Calu3 (cell line): ENCODE measurements at regions of chr2 and their contacts with region 1.

Region 1: GRCh38 chr2:15939854-15940660 is at the start of gene MYCN:
- DNase-seq: peak; percentile 81
- H3K4me3 Mint-ChIP-seq: peak within 1 kb of the TSS; percentile 99
- H3K27ac Mint-ChIP-seq: peak within 1 kb of the TSS; percentile 50
- H3K4me1 Mint-ChIP-seq: peaks cover 22% of the 10 kb centered on the region
- H3K27me3 Mint-ChIP-seq: no peaks in the 10 kb centered on the region
- CTCF ChIP-seq: peak; percentile 86
- total RNA-seq, gene MYCN: 5.5 and 8.7 TPM in 2 replicates

Region 2: GRCh38 chr2:15636972-15637785 is 302.9 kb before region 1 on chr2:
- CTCF ChIA-PET with region 1: no interaction called
- intact Hi-C with region 1: loop called (anchors 5 kb)
- DNase-seq: peak; percentile 61
- H3K4me3 Mint-ChIP-seq: no peak overlapping the region
- H3K27ac Mint-ChIP-seq: no peak overlapping the region
- H3K4me1 Mint-ChIP-seq: no peaks in the 10 kb centered on the region
- H3K27me3 Mint-ChIP-seq: no peaks in the 10 kb centered on the region
- CTCF ChIP-seq: peak; percentile 78

Region 3: GRCh38 chr2:15976354-15976753 is 36.3 kb after region 1 on chr2:
- CTCF ChIA-PET with region 1: interaction called, 4 read pairs
- intact Hi-C with region 1: loop called (anchors 1 kb)
- DNase-seq: peak; percentile 62
- H3K4me3 Mint-ChIP-seq: no peak overlapping the region
- H3K27ac Mint-ChIP-seq: peak overlapping the region; percentile 75
- H3K4me1 Mint-ChIP-seq: peaks cover 47% of the 10 kb centered on the region
- H3K27me3 Mint-ChIP-seq: no peaks in the 10 kb centered on the region
- CTCF ChIP-seq: no peak

Region 4: DNA sequence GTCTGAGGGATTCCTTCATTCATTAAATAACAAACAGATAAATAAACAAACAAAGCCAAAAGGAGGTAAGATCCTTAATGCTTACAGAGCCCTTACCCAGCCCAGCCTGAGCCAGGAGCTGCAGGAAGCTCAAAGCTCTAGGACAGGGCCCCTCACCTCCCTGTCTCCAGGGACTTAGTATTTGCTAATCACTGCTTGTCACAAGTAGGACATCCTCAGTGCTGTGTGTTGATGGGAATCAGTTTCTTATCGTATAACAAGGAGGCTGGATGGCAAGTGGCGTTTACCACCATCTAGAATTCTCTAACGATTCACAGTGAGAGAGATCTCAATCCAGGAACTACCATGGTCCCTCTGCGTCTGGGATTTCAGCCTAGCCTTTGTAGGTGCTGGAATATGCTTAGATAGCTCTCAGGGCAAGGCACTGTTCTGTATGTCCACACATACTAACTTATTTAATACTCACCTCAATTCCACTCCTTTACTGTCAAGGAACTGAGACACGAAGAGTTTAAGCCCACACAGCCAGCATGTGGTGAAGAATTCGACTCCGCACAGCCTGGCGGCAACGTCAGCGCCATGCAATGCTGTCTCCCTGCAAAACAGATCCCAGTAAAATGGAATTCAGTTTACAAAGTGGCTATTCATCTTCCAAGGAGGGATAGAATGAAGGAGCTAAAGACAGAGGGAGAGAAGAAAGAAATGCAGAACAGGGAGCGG is 165.1 kb after region 1 on chr2:
- CTCF ChIA-PET with region 1: interaction called, 3 read pairs
- intact Hi-C with region 1: loop called (anchors 5 kb)
- DNase-seq: no peak
- H3K4me3 Mint-ChIP-seq: no peak overlapping the region
- H3K27ac Mint-ChIP-seq: no peak overlapping the region
- H3K4me1 Mint-ChIP-seq: peaks cover 9% of the 10 kb centered on the region
- H3K27me3 Mint-ChIP-seq: no peaks in the 10 kb centered on the region
- CTCF ChIP-seq: no peak

Region 5: DNA sequence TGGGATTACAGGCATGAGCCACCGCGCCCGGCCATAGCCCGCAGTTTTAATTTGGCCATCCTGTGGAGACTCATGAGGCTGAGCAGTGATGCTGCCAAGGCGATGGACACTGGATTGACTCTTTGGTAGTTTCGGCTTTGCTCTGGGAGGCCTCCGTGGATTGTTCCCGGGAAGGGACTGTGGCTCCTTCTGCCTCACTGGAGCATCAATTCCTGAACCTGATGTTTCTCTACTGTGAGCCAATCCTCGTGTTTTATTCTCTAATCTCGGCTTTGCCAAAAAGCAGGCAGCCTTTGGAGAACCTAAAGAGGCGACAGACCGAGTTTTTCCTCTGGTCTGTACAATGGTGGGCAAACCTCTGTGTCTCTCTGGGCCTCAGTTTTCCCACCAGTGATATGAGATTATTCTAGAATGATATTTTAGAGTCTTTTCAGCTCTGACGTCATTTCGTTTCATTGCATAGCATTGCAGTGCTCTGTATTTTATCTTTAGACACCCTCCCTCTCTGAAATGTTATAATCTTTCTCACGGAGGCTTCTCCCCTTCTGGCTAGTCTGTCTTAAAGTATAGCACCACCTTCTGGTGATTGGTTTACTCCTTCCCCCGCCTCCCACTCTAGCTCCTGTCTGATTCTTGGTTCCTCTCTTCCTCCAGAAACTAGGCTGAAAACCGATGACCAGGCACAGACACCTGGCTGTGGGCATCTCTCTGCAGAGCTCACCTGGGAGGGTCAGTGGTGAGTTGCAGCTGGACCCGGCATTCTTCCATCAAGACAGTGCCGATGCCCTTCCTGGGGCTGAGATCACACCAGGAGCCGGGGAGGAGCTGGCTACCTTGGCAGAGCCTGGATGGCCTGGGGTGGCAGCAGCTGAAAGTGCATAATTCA is 341.6 kb after region 1 on chr2:
- CTCF ChIA-PET with region 1: interaction called, 47 read pairs
- intact Hi-C with region 1: loop called (anchors 1 kb)
- DNase-seq: peak; percentile 57
- H3K4me3 Mint-ChIP-seq: no peak overlapping the region
- H3K27ac Mint-ChIP-seq: no peak overlapping the region
- H3K4me1 Mint-ChIP-seq: no peaks in the 10 kb centered on the region
- H3K27me3 Mint-ChIP-seq: peaks cover 24% of the 10 kb centered on the region
- CTCF ChIP-seq: peak; percentile 51

Region 6: GRCh38 chr2:16608661-16609643 is 668.9 kb after region 1 on chr2:
- CTCF ChIA-PET with region 1: interaction called, 3 read pairs
- intact Hi-C with region 1: loop called (anchors 5 kb)
- DNase-seq: peak; percentile 90
- H3K4me3 Mint-ChIP-seq: peak overlapping the region; percentile 58
- H3K27ac Mint-ChIP-seq: no peak overlapping the region
- H3K4me1 Mint-ChIP-seq: peaks cover 2% of the 10 kb centered on the region
- H3K27me3 Mint-ChIP-seq: peaks cover 44% of the 10 kb centered on the region
- CTCF ChIP-seq: peak; percentile 94